ENCODE measurements at regions of chr11 and their contacts with region 1.

Region 1: GRCh38 chr11:73597956-73598718 is at the start of gene FAM168A:
- DNase-seq: peak; percentile 97
- ATAC-seq: peak; percentile 94
- H3K4me3 Mint-ChIP-seq: peak within 1 kb of the TSS; percentile 87
- H3K27ac Mint-ChIP-seq: peak within 1 kb of the TSS; percentile 92
- H3K4me1 Mint-ChIP-seq: peaks cover 34% of the 10 kb centered on the region
- H3K27me3 Mint-ChIP-seq: no peaks in the 10 kb centered on the region
- total RNA-seq, gene FAM168A: 12.7 to 17.5 TPM

Region 2: DNA sequence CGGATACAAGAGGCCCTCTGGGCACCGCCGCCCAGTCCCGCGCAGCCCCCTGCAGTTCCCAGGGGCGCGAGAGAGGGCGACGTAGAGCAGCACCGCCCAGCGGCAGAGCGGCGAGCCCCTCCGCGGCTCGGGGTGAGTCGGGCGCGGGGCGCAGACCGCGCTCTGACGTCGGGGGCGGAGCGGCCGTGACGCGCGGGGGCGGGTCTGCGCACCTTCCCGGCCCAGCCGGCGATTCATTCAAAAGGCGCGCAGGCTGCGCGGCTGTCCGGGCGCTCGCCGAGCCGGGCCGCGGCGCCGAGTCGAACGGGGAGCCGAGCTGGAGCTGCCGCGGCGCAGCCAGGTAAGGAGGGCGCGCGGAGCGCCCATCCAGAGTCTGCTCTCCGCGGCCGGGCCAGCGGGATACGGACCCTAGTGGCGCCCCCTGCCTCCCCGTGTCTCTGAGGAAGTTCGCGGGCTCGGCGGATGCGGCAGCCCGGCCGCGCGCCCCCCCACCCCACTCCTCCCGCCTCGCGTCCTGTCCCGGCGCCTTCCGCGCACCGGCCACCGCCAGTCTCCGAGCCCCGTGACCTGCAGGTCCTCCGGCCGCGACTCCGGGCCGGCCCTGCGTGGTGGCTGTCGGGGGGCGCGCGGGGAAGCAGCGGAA is 221.9 kb before region 1 on chr11 and contains the start of gene RELT:
- CTCF ChIA-PET with region 1: no interaction called
- POLR2A ChIA-PET with region 1: no interaction called
- intact Hi-C with region 1: loop called (anchors 1 to 2 kb)
- DNase-seq: peak; percentile 96
- ATAC-seq: peak; percentile 94
- H3K4me3 Mint-ChIP-seq: peak within 1 kb of the TSS; percentile 92
- H3K27ac Mint-ChIP-seq: peak within 1 kb of the TSS; percentile 93
- H3K4me1 Mint-ChIP-seq: peaks cover 33% of the 10 kb centered on the region
- H3K27me3 Mint-ChIP-seq: no peaks in the 10 kb centered on the region
- total RNA-seq, gene RELT: 18.5 to 21.3 TPM

Region 3: GRCh38 chr11:73498343-73498742 is 99.8 kb before region 1 on chr11:
- CTCF ChIA-PET with region 1: no interaction called
- POLR2A ChIA-PET with region 1: no interaction called
- intact Hi-C with region 1: no loop called
- DNase-seq: no peak
- ATAC-seq: no peak
- H3K4me3 Mint-ChIP-seq: no peak overlapping the region
- H3K27ac Mint-ChIP-seq: no peak overlapping the region
- H3K4me1 Mint-ChIP-seq: peaks cover 23% of the 10 kb centered on the region
- H3K27me3 Mint-ChIP-seq: no peaks in the 10 kb centered on the region

Region 4: DNA sequence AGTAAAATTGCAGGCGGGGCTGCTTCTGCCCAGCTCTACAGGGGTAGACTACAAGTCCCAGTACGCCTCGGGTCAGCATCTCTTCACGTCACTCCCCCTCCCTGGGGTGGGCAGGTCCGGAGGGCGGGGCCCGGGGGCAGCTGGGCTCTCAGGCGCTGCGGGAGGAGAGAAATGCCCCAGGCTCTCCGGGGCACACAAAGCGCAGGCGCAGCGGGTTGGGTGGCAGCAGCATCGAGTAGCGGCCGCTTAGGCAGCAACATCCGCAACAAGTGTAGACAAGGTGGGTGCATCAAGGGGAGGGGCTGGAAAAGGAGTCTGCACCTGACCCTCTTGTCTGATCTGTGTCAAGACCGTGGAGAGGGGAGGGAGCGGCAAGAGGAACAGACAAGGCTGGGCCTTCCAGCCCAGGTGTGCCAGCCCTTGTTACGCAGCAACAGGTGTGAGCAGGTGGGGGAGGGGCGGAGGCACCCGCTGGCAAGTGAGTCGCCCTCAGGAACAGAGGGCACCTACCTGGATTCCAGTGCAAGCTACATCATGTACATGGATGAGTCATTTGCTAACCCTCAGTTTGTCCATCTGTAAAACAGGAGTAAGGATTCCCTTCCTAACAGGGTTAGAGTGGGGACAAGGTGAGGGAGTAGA is 49.4 kb after region 1 on chr11:
- CTCF ChIA-PET with region 1: interaction called, 3 read pairs
- POLR2A ChIA-PET with region 1: no interaction called
- intact Hi-C with region 1: loop called in 1 of 2 experiments (anchors 1 kb)
- DNase-seq: peak; percentile 96
- ATAC-seq: peak; percentile 100
- H3K4me3 Mint-ChIP-seq: peak overlapping the region; percentile 75
- H3K27ac Mint-ChIP-seq: peak overlapping the region; percentile 86
- H3K4me1 Mint-ChIP-seq: peaks cover 15% of the 10 kb centered on the region
- H3K27me3 Mint-ChIP-seq: no peaks in the 10 kb centered on the region

Region 5: DNA sequence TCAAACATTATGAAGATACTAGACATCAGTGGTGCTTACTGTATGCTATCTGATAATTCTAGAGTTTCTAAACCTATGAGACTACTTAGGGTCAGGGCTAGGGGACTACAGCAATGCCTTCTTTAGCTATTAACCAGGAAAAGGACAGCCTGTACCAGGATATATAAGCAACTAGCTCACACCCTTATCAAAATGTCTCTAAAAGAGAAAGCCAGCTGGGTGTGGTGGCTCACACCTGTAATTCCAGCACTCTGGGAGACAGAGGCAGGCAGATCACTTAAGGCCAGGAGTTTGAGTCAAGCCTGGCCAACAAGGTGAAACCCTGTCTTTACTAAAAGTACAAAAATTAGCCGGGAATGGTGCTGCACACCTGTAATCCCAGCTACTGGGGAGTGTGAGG is 106.9 kb after region 1 on chr11:
- CTCF ChIA-PET with region 1: no interaction called
- POLR2A ChIA-PET with region 1: no interaction called
- intact Hi-C with region 1: no loop called
- DNase-seq: no peak
- ATAC-seq: no peak
- H3K4me3 Mint-ChIP-seq: no peak overlapping the region
- H3K27ac Mint-ChIP-seq: no peak overlapping the region
- H3K4me1 Mint-ChIP-seq: no peaks in the 10 kb centered on the region
- H3K27me3 Mint-ChIP-seq: no peaks in the 10 kb centered on the region

Region 6: DNA sequence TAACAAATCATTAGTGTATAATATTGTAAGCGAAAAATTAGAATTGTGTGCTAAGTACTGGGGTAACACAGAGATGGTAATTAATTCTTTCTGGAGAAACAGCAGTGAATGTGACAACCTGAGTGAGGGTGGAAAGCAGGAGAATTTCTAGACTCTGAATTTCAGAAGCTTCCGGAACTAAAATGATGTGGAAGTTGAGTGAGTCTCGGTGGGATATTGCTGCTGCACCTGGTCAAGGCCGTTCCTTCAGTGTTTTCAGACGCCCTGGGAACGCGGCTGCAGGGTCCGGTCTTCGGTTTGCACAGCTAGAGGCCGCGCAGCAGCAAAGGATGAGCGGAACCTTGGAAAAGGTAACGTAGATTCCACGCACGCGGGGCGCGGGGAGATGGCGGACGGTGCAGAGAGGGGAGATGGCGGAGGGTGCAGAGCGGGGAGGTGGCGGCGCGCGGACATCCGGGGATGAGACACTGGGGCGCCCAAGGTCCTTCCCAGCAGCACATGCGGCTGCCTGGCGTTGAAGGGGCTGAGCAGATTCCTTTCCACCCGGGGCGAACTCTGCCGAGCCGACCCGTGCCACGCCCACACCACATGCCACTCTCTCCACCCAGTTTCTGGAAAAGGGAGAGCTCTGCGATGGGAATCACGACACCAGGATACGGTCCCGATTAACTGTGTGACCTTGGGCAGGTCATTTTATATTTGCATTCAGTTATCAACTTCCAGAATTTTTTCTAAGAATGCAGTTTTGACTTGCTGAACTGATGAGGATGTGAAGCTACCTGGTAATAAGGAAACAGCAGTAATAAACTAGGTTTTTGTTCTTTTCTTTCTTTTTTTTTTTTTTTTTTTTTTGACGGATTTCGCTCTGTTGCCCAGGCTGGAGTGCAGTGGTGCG is 189.8 kb after region 1 on chr11 and contains the start of gene MRPL48:
- CTCF ChIA-PET with region 1: no interaction called
- POLR2A ChIA-PET with region 1: no interaction called
- intact Hi-C with region 1: loop called in 1 of 2 experiments (anchors 1 kb)
- DNase-seq: peak; percentile 95
- ATAC-seq: peak; percentile 99
- H3K4me3 Mint-ChIP-seq: peak within 1 kb of the TSS; percentile 92
- H3K27ac Mint-ChIP-seq: peak within 1 kb of the TSS; percentile 99
- H3K4me1 Mint-ChIP-seq: peaks cover 9% of the 10 kb centered on the region
- H3K27me3 Mint-ChIP-seq: no peaks in the 10 kb centered on the region
- total RNA-seq, gene MRPL48: 48.5 to 52.0 TPM

Region 7: GRCh38 chr11:74398244-74399159 is 800.4 kb after region 1 on chr11 and contains the start of gene PGM2L1:
- CTCF ChIA-PET with region 1: no interaction called
- POLR2A ChIA-PET with region 1: no interaction called
- intact Hi-C with region 1: loop called in 1 of 2 experiments (anchors 1 kb)
- DNase-seq: peak; percentile 96
- ATAC-seq: peak; percentile 88
- H3K4me3 Mint-ChIP-seq: peak within 1 kb of the TSS; percentile 92
- H3K27ac Mint-ChIP-seq: peak within 1 kb of the TSS; percentile 100
- H3K4me1 Mint-ChIP-seq: peaks cover 39% of the 10 kb centered on the region
- H3K27me3 Mint-ChIP-seq: no peaks in the 10 kb centered on the region
- total RNA-seq, gene PGM2L1: 8.8 to 11.0 TPM

Region 8: GRCh38 chr11:74948898-74949747 is 1351.0 kb after region 1 on chr11 and contains the starts of genes SPCS2 and XRRA1:
- CTCF ChIA-PET with region 1: no interaction called
- POLR2A ChIA-PET with region 1: no interaction called
- intact Hi-C with region 1: loop called in 1 of 2 experiments (anchors 5 kb)
- DNase-seq: peak; percentile 100
- ATAC-seq: peak; percentile 99
- H3K4me3 Mint-ChIP-seq: peak within 1 kb of the TSS; percentile 96
- H3K27ac Mint-ChIP-seq: peak within 1 kb of the TSS; percentile 97
- H3K4me1 Mint-ChIP-seq: peaks cover 42% of the 10 kb centered on the region
- H3K27me3 Mint-ChIP-seq: no peaks in the 10 kb centered on the region
- total RNA-seq, gene SPCS2: 124 to 131 TPM
- total RNA-seq, gene XRRA1: 7.8 to 11.9 TPM